ENCODE measurements at regions of chr10 and their contacts with region 1.

Region 1: DNA sequence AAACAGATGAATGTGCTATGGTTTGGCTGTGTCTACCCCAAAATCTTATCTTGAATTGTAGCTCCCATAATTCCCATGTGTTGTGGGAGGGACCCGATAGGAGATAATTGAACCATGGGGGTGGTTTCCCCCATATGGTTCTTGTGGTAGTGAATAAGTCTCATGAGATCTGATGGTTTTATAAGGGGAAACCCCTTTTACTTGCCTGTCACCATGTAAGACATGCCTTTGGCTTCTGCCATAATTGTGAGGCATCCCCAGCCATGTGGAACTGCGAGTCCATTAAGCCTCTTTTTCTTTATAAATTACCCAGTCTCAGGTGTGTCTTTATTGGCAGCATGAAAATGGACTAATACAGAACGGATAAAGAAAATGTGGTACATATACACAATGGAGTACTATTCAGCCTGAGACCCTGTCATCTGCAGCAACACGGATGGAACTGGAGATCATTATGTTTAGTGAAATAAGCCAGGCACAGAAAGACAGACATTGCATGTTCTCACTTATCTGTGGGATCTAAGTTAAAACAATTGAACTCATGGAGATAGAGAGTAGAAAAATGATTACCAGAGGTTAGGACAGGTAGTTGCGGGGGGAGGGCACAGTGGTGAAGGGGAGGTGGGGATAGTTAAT is 587.6 kb upstream of the NRP1 start:
- DNase-seq: no peak
- ATAC-seq: no peak

Region 2: DNA sequence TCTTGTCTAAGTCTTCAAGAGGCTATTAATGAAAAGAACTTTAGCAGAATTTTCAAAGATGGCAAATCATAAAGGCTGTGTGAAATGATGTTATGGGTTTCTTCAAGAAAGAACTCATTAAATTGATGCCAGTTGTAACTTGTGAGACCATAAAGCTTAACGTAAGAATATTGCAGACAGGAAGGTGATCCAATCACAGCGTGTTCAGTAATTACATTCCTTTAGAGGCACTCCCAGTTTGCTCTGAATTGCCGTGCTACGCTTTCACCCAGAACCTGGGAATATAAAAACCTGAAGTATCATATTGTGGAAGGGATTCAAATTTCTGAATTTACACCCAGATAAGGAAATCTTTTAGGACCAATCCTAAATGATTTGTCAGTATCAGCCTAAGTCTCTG is 900.0 kb before region 1 on chr10:
- intact Hi-C with region 1: loop called (anchors 5 kb)
- DNase-seq: no peak
- ATAC-seq: no peak

Measured in sciatic nerve (tissue), 2 donors.